GM10248 (cell line): ENCODE measurements at regions of chr14 and their contacts with region 1.

Region 1: DNA sequence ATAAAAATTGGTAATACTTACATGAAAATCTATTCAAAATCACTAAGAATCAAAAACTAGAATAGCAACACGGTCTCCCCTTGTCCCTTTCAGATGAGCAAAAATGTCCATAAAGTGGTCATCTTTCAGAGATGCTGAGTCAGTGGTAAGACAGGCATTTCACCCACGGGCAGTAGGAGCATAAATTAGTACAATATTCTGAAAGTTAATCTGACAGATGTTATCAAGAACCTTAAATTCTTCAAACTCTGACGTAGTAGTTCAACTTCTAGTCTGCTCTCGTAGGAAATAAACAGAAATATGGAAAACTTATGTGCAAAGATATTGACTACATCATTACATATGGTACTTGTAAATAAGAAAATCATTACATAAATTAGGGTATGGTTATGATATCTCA is 33.1 kb upstream of the GNPNAT1 start:
- DNase-seq: no peak
- CTCF ChIP-seq: no peak

Region 2: DNA sequence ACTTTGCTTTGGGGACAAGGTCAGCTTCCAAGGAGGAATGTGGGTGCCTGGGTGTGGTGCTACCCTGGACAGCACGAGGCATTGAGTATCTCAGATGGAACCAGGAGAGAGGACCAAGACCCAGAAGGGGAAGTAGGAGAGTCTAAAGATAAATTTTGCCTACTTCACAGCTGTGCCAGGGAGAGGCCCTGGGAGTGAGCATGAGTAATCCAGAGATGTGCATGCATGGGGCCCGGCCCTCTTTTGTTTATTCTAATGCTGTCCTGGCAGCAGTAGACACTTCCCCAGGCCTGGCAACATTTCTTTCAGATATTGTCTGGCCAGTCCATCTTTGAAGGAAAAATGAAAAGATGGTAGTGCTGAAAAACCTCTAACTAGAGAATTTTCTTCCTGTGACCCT is 16.4 kb after region 1 on chr14:
- CTCF ChIA-PET with region 1: interaction called, 11 read pairs
- POLR2A ChIA-PET with region 1: no interaction called
- DNase-seq: peak; percentile 19
- CTCF ChIP-seq: no peak

Region 3: DNA sequence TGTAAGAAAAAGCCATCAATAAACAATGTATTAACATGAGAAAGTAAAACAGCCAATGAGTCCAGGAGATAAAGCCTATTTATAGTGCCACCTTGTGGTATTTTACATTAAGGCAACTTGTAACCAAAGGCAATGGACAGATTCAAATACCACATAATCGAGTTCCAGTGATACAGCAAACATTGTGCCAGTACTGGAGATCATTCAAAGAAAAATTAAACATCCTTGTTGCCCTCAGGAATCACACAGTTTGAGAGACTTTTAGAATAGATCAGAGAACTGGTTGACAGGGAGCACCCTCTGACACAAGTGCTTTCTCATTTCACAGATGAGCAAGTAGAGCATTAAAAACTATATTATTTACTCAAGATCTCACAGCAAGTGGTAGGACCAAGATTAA is 230.5 kb after region 1 on chr14:
- CTCF ChIA-PET with region 1: interaction called, 11 read pairs
- POLR2A ChIA-PET with region 1: no interaction called
- DNase-seq: peak; percentile 30
- CTCF ChIP-seq: peak; percentile 61

Region 4: GRCh38 chr14:53306267-53306721 is 481.8 kb after region 1 on chr14:
- CTCF ChIA-PET with region 1: interaction called, 12 read pairs
- POLR2A ChIA-PET with region 1: no interaction called
- DNase-seq: peak; percentile 38
- CTCF ChIP-seq: peak; percentile 55